Activated CD4-positive, alpha-beta T cell treated with anti-CD3 and anti-CD28 coated beads, Interleukin-2, amount 10 ng/mL, durations not matched to agents 24 days and 14 days (primary cell): ENCODE measurements at regions of chr17 and their contacts with region 1.

Region 1: DNA sequence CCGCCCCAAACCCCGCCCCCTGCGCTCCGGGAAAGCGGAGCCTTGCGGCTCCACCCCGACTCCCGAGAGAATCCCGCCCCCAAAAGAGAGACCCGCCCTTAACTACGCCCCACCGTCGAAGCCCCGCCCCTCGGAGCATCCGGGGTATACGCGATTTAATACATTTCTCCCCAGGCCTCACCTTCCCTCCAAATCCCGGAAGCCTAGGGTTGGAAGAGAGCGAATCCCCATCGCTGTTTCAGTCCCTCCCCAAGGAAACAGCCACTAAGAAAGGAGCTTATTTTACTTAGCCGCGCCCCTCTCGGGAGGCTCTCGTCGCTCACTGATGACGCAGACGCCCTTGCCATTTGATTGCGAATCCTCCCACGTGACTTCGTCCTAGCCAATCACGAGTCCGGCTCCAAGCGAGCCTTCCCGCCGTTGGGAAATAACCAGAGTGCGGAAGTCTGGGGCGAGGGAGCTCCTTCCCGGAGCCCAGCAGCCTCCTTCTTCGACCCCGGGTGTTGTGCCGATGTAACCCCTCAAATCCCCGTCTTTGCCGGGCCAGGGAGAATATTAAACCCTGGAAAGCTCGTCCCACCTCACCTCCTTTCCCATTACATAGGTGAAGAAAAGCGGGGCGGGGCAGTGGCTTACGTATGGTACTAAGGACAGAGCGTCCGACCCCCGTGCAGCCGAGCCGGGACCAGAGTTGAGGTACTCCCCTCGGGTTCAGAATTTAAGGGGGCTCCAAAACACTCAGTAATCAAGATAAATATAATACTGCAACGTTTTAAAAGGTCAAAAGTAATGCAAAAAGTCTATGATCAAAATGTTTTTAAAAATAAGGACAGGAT is 462 bp upstream of the FDXR start:
- DNase-seq: peak; percentile 99
- H3K4me3 Mint-ChIP-seq: peak overlapping the region; percentile 89
- H3K27ac Mint-ChIP-seq: peak overlapping the region; percentile 84
- H3K4me1 Mint-ChIP-seq: peaks cover 30% of the 10 kb centered on the region
- H3K27me3 Mint-ChIP-seq: no peaks in the 10 kb centered on the region

Region 2: DNA sequence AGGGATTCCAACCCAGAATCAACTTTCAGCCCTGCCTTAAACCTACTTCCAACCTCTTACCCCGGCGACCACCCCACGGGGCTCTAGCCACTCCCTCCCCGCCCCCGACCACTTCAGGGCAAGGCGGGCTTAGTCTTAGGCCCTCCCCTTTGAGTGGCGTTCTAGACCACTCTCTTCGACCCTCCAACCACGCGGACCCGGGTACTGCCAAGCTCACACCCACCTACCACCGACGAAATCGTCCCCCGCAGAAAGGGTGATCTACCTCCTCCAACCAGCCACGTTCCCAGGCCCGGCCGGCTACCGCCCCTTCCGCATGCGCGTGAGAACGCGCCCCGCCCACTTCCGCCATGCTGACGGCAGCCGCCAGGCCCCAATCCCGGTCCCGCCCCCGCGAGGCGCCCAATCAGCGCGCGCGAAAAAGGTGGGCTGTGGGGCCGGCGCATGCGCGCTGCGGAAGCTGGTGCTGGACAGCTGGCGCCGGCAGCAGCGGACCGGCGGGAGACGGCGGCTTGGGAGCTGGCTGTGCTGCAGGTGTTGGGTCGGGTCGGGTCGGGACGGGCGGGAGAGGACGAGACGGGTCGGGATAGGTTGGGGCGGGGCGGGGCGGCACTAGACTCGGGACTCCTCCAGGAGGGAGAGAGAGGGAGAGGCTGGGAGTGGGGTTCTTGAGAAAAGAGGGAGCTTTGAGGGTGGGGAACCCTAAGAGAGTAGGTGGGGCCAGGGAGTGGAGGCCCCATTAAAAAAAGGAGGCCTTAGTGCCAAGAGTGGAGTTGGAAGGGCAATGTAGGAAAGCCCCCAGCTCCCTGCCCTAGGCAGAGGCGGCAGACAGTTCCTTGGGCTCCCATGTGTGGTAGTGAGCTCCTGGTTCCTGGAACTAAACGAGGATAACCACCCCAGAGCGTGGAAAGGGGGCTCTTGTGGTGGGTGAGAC is 96.9 kb before region 1 on chr17 and contains the start of gene NAT9:
- intact Hi-C with region 1: loop called (anchors 5 kb)
- DNase-seq: peak; percentile 100
- H3K4me3 Mint-ChIP-seq: peak within 1 kb of the TSS; percentile 100
- H3K27ac Mint-ChIP-seq: peak within 1 kb of the TSS; percentile 91
- H3K4me1 Mint-ChIP-seq: peaks cover 47% of the 10 kb centered on the region
- H3K27me3 Mint-ChIP-seq: no peaks in the 10 kb centered on the region
- total RNA-seq, gene NAT9: 62.7 and 67.6 TPM in 2 replicates

Region 3: GRCh38 chr17:74852237-74853047 is 20.8 kb before region 1 on chr17:
- intact Hi-C with region 1: loop called (anchors 1 kb)
- DNase-seq: peak; percentile 93
- H3K4me3 Mint-ChIP-seq: peak overlapping the region; percentile 88
- H3K27ac Mint-ChIP-seq: peak overlapping the region; percentile 34
- H3K4me1 Mint-ChIP-seq: peaks cover 9% of the 10 kb centered on the region
- H3K27me3 Mint-ChIP-seq: peaks cover 45% of the 10 kb centered on the region

Region 4: GRCh38 chr17:74892013-74892841 is 19.0 kb after region 1 on chr17:
- intact Hi-C with region 1: no loop called
- DNase-seq: no peak
- H3K4me3 Mint-ChIP-seq: no peak overlapping the region
- H3K27ac Mint-ChIP-seq: no peak overlapping the region
- H3K4me1 Mint-ChIP-seq: peaks cover 2% of the 10 kb centered on the region
- H3K27me3 Mint-ChIP-seq: peaks cover 46% of the 10 kb centered on the region

Region 5: GRCh38 chr17:75012346-75013091 is 139.3 kb after region 1 on chr17 and contains the start of gene MRPL58:
- intact Hi-C with region 1: loop called (anchors 1 kb)
- DNase-seq: peak; percentile 95
- H3K4me3 Mint-ChIP-seq: peak within 1 kb of the TSS; percentile 97
- H3K27ac Mint-ChIP-seq: peak within 1 kb of the TSS; percentile 93
- H3K4me1 Mint-ChIP-seq: peaks cover 21% of the 10 kb centered on the region
- H3K27me3 Mint-ChIP-seq: no peaks in the 10 kb centered on the region
- total RNA-seq, gene MRPL58: 73.3 and 74.3 TPM in 2 replicates

Region 6: GRCh38 chr17:75301502-75302206 is 428.4 kb after region 1 on chr17:
- intact Hi-C with region 1: no loop called
- DNase-seq: no peak
- H3K4me3 Mint-ChIP-seq: no peak overlapping the region
- H3K27ac Mint-ChIP-seq: no peak overlapping the region
- H3K4me1 Mint-ChIP-seq: peaks cover 7% of the 10 kb centered on the region
- H3K27me3 Mint-ChIP-seq: no peaks in the 10 kb centered on the region